ENCODE measurements at regions of chr19 and their contacts with region 1.

Region 1: DNA sequence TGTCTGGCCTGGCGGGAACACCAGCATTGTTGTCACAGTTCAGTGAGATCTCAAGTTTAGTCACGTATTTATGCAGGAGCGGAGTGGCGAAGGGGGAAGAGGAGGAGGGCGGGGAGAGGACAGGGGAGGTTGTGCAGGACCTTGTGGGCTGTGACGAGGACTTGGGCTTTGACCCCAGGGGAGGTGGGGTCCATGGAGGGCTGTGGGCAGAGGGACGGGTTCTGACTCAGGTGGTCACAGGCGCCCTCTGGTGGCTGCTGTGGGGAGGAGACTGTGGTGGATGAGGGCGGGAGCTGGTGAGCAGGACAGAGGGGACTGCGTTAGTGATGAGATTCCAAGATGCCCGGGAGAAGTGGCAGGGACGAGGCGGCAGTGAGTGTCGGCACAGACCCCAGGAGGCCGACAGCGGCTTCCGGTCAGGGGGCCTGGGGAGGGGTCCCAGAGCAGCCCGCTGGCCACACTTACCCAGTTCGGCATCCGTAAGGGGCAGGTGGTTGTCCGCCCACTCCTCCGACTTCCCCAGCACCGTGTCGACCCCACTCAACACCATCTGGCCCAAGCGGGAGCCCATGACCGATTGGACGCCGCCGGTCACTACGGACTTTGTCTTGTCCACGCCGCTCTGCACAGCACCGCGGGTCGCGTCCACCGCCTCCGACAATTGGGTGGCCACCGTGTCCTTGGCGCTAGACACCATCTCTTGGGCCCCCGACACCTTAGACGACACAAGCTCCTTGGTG is 15.7 kb downstream of the PLIN3 start:
- DNase-seq: peak; percentile 59 to 86 (median 66)
- H3K4me3 ChIP-seq: no peak overlapping the region
- H3K27ac ChIP-seq: no peak overlapping the region
- H3K4me1 ChIP-seq: peaks cover 0 to 5% of the 10 kb centered on the region in 2 donors
- H3K27me3 ChIP-seq: no peaks in the 10 kb centered on the region
- CTCF ChIP-seq: peak; percentile 56 to 93 (median 76)
- POLR2A ChIP-seq: no peak

Region 2: DNA sequence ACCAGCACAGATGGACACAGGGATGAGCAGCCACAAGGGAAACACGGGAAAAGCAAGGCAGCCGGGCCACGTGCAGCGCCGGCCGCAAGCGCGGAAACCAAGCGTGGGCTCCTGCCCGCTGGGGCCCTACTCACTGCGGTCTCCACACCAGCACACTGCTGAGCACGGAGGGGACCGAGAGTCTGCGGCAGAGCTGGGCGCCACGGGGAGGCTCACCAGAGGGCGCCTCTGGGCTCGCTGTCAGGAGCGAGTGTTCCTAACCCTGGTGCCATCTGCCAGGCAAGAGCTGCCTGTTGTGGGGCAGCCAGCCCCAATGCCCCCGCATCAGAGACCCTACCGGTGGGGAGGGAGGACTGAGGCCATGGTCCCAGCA is 481.8 kb before region 1 on chr19:
- intact Hi-C with region 1: no loop called
- DNase-seq: peak; percentile 52 to 82 (median 62)
- H3K4me3 ChIP-seq: peak overlapping the region in 1 of 4 donors; percentile 4
- H3K27ac ChIP-seq: peak overlapping the region in 4 of 5 donors; percentile 16 to 96 (median 90)
- H3K4me1 ChIP-seq: peaks cover 66 to 73% of the 10 kb centered on the region in 2 donors
- H3K27me3 ChIP-seq: no peaks in the 10 kb centered on the region
- CTCF ChIP-seq: peak in 5 of 6 experiments; percentile 20 to 51 (median 43)
- POLR2A ChIP-seq: no peak

Region 3: DNA sequence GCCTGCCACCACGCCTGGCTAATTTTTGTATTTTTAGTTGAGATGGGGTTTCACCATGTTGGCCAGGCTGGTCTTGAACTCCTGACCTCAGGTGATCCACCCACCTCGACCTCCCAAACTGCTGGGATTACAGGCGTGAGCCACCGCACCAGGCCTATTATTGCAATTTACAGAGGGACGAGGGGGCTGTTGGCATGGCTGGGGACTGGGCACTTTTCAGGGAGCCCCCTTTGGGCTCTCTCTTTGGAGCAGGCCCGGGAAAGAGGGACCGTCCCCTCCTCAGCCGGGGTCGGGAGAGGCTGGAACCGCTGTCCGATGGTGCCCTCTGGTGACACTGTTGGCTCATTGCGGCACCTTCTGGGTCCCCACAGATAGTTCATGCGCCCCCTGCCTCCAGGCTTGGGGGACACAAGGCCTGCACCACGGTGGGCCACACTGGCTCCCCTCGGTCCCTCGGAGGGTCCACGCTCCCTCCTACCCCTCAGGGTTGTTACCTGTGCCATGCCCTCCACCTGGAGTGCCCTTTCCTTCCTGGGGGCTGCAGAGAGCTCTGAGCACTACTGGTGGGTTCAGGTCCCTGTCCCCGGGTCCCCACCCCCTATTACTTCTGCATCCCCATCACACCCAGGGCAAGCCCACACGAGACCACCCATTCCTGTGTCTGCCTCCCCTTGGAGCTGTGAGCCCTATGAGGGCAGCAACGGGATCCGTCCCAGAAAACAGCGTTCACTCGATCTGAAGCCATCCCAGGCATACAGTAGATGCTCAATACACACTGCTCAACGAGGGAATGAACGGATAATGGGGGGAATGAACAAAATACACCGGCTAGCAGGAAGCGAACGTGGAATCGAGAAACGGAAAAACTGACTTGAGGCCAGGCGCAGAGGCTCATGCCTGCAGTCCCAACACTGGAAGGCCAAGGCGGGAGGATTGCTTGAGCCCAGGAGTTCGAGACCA is 47.7 kb before region 1 on chr19:
- intact Hi-C with region 1: loop called in 1 of 2 experiments (anchors 10 kb)
- DNase-seq: peak in 6 of 7 donors; percentile 44 to 72 (median 60)
- H3K4me3 ChIP-seq: no peak overlapping the region
- H3K27ac ChIP-seq: no peak overlapping the region
- H3K4me1 ChIP-seq: no peaks in the 10 kb centered on the region
- H3K27me3 ChIP-seq: no peaks in the 10 kb centered on the region
- CTCF ChIP-seq: peak; percentile 41 to 74 (median 67)
- POLR2A ChIP-seq: no peak

Region 4: DNA sequence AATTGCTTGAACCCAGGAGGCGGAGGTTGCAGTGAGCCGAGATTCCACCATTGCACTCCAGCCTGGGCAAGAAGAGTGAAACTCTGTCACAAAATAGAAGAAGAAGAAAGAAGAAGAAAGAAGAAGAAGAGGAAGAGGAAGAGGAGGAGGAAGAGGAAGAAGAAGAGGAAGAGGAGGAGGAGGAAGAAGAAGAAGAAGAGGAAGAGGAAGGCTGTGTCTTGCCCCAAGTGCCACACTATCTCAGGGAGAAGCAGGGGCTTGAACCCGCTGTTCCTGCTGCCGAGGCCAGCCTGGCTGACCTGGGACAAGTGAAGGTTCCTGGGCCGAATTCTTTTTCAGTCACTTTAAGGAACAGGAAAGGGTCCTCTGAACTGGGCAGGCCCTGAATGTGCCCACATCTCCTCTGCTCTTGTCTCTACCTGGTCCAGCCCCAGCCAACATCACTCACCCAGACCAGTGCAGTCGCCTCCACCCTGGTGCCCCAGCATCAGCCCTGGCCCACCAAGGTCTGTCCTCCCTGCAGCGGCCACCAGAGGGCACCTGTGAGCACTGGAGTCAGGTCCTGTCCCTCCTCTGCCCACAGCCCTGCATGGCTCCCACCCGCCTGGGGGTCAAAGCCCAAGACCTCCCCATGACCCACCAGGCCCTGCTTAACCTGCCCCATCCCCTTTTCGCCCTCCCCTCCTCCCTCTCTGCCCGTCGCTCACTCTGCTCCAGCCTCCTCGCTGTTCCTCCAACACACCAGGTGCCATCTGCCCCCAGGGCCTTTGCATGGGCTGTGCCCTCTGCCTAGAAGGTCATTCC is 40.2 kb before region 1 on chr19:
- intact Hi-C with region 1: loop called (anchors 5 to 10 kb)
- DNase-seq: peak; percentile 77 to 93 (median 86)
- H3K4me3 ChIP-seq: no peak overlapping the region
- H3K27ac ChIP-seq: peak overlapping the region in 1 of 5 donors; percentile 31
- H3K4me1 ChIP-seq: peaks cover 6 to 11% of the 10 kb centered on the region in 2 donors
- H3K27me3 ChIP-seq: no peaks in the 10 kb centered on the region
- CTCF ChIP-seq: peak; percentile 79 to 89 (median 82)
- POLR2A ChIP-seq: no peak